ENCODE measurements at regions of chr2 and their contacts with region 1.

Region 1: GRCh38 chr2:121530212-121530705 is 421 bp upstream of the RNU4ATAC start:
- DNase-seq: peak in 2 of 5 donors; percentile 86 to 88
- H3K4me3 ChIP-seq: peak overlapping the region; percentile 68 to 96
- H3K4me3 Mint-ChIP-seq: peak overlapping the region; percentile 89 to 98 (median 96)
- H3K27ac ChIP-seq: peak overlapping the region; percentile 100
- H3K27ac Mint-ChIP-seq: peak overlapping the region; percentile 96 to 99 (median 99)
- H3K4me1 ChIP-seq: peaks cover 24% of the 10 kb centered on the region
- H3K4me1 Mint-ChIP-seq: peaks cover 23 to 49% (median 29%) of the 10 kb centered on the region in 4 donors
- H3K27me3 ChIP-seq: no peaks in the 10 kb centered on the region
- H3K27me3 Mint-ChIP-seq: no peaks in the 10 kb centered on the region

Region 2: DNA sequence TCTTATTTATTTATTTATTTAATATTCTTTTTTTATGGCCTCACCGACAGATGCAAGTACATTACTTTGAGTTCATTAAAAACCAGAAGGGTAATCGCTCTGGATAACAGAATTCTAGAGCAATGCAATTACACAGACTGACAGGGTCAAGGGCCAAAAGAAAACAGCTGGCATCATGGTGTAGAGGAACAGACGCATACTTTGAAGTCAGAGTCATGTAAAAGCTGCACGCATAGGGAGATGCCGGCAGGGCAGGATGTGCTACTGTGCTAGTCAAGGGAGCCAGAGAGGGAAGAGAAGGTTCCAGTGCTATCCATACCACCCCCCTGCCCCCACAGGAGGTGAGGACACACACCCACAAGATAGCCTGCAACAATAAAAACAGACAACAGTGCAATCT is 130.1 kb before region 1 on chr2:
- CTCF ChIA-PET with region 1: interaction called, 4 read pairs
- POLR2A ChIA-PET with region 1: interaction called, 5 read pairs
- intact Hi-C with region 1: loop called (anchors 1 kb)
- DNase-seq: no peak
- H3K4me3 ChIP-seq: no peak overlapping the region
- H3K4me3 Mint-ChIP-seq: no peak overlapping the region
- H3K27ac ChIP-seq: no peak overlapping the region
- H3K27ac Mint-ChIP-seq: peak overlapping the region in 1 of 7 donors; percentile 57
- H3K4me1 ChIP-seq: no peaks in the 10 kb centered on the region
- H3K4me1 Mint-ChIP-seq: peaks cover 0 to 4% (median 0%) of the 10 kb centered on the region in 4 donors
- H3K27me3 ChIP-seq: no peaks in the 10 kb centered on the region
- H3K27me3 Mint-ChIP-seq: no peaks in the 10 kb centered on the region

Region 3: DNA sequence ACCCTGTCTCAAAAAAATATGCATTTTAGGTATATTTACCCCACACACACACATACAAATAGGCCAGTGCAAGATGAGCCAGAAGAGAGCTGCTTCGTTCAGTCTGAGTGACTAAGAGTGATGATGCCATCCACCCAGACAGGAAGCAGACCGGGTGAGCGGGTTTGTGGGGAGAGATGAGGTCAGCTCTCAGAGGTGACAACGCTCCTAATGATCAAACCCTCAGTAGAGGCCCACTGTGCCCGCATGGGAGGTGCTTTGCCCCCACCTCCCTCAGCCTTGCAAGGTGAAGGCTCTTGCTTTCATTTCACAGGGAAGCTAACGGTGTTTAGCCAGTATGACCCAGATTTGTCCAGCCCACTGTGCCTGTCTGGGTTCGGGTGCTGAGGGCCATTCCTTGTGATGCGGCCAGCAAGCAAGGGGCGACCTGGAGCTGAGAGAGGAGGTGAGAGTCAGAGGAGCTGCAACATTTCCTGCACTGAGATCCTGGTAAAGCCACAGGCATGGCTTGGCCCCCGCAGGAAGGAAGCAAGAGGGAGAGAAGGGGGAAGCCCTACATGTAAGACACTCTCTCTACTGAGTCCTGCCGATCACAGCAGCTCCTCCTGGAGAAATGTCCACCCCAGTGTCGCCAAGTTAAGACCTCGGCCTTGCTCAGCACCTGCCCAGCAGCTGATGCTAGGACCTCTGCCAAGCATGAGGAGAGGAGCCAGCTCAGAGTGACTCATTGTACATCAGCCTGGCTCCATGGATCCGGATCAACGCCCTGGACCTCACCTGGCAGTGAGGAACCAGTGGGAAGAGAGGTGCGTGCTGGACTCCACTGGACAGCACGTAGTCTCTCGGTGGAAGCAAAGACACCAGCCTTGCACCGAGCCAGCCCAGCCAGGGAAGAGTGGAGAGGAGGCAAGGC is 169.4 kb after region 1 on chr2:
- CTCF ChIA-PET with region 1: interaction called, 11 read pairs
- POLR2A ChIA-PET with region 1: interaction called, 39 read pairs
- intact Hi-C with region 1: loop called (anchors 1 kb)
- DNase-seq: peak; percentile 80 to 98 (median 83)
- H3K4me3 ChIP-seq: peak overlapping the region; percentile 5 to 36
- H3K4me3 Mint-ChIP-seq: peak overlapping the region; percentile 82 to 92 (median 84)
- H3K27ac ChIP-seq: peak overlapping the region; percentile 55
- H3K27ac Mint-ChIP-seq: peak overlapping the region; percentile 92 to 99 (median 99)
- H3K4me1 ChIP-seq: peaks cover 32% of the 10 kb centered on the region
- H3K4me1 Mint-ChIP-seq: peaks cover 27 to 51% (median 36%) of the 10 kb centered on the region in 4 donors
- H3K27me3 ChIP-seq: no peaks in the 10 kb centered on the region
- H3K27me3 Mint-ChIP-seq: no peaks in the 10 kb centered on the region

Region 4: GRCh38 chr2:121736462-121737341 is 206.4 kb after region 1 on chr2 and contains the start of gene NIFK:
- CTCF ChIA-PET with region 1: interaction called, 7 read pairs
- POLR2A ChIA-PET with region 1: interaction called, 63 read pairs
- intact Hi-C with region 1: loop called (anchors 1 kb)
- DNase-seq: peak; percentile 99 to 100 (median 99)
- H3K4me3 ChIP-seq: peak within 1 kb of the TSS; percentile 80 to 88
- H3K4me3 Mint-ChIP-seq: peak within 1 kb of the TSS; percentile 94 to 99 (median 98)
- H3K27ac ChIP-seq: peak within 1 kb of the TSS; percentile 80
- H3K27ac Mint-ChIP-seq: peak within 1 kb of the TSS; percentile 94 to 98 (median 97)
- H3K4me1 ChIP-seq: peaks cover 31% of the 10 kb centered on the region
- H3K4me1 Mint-ChIP-seq: peaks cover 15 to 51% (median 32%) of the 10 kb centered on the region in 4 donors
- H3K27me3 ChIP-seq: no peaks in the 10 kb centered on the region
- H3K27me3 Mint-ChIP-seq: no peaks in the 10 kb centered on the region
- total RNA-seq, gene NIFK: 61.6 to 62.8 TPM

Region 5: GRCh38 chr2:121974897-121975661 is 444.8 kb after region 1 on chr2:
- CTCF ChIA-PET with region 1: no interaction called
- POLR2A ChIA-PET with region 1: no interaction called
- intact Hi-C with region 1: loop called (anchors 10 kb)
- DNase-seq: peak; percentile 43 to 62 (median 56)
- H3K4me3 ChIP-seq: peak overlapping the region; percentile 39 to 46
- H3K4me3 Mint-ChIP-seq: peak overlapping the region; percentile 79 to 87 (median 82)
- H3K27ac ChIP-seq: no peak overlapping the region
- H3K27ac Mint-ChIP-seq: peak overlapping the region in 5 of 7 donors; percentile 36 to 76 (median 62)
- H3K4me1 ChIP-seq: peaks cover 4% of the 10 kb centered on the region
- H3K4me1 Mint-ChIP-seq: peaks cover 6 to 15% (median 10%) of the 10 kb centered on the region in 4 donors
- H3K27me3 ChIP-seq: no peaks in the 10 kb centered on the region
- H3K27me3 Mint-ChIP-seq: peaks cover 0 to 2% of the 10 kb centered on the region in 2 donors

Measured in CD4-positive, alpha-beta memory T cell (primary cell).